ENCODE measurements at regions of chr7 and their contacts with region 1.

Region 1: GRCh38 chr7:97064967-97065587 is 40.4 kb upstream of the DLX5 start:
- DNase-seq: peak in 4 of 5 donors; percentile 20 to 38 (median 28)
- H3K4me3 ChIP-seq: no peak overlapping the region
- H3K4me3 Mint-ChIP-seq: no peak overlapping the region
- H3K27ac ChIP-seq: no peak overlapping the region
- H3K27ac Mint-ChIP-seq: no peak overlapping the region
- H3K4me1 ChIP-seq: no peaks in the 10 kb centered on the region
- H3K4me1 Mint-ChIP-seq: no peaks in the 10 kb centered on the region
- H3K27me3 ChIP-seq: no peaks in the 10 kb centered on the region
- H3K27me3 Mint-ChIP-seq: peaks cover 1 to 2% of the 10 kb centered on the region in 2 donors

Region 2: GRCh38 chr7:96075510-96076349 is 989.3 kb before region 1 on chr7:
- CTCF ChIA-PET with region 1: interaction called, 9 read pairs
- POLR2A ChIA-PET with region 1: no interaction called
- intact Hi-C with region 1: loop called (anchors 1 kb)
- DNase-seq: peak; percentile 36 to 49 (median 42)
- H3K4me3 ChIP-seq: peak overlapping the region in 1 of 2 donors; percentile 30
- H3K4me3 Mint-ChIP-seq: peak overlapping the region; percentile 86 to 95 (median 88)
- H3K27ac ChIP-seq: no peak overlapping the region
- H3K27ac Mint-ChIP-seq: no peak overlapping the region
- H3K4me1 ChIP-seq: peaks cover 10% of the 10 kb centered on the region
- H3K4me1 Mint-ChIP-seq: peaks cover 0 to 9% (median 6%) of the 10 kb centered on the region in 4 donors
- H3K27me3 ChIP-seq: peaks cover 15% of the 10 kb centered on the region
- H3K27me3 Mint-ChIP-seq: peaks cover 17 to 27% of the 10 kb centered on the region in 2 donors

Region 3: DNA sequence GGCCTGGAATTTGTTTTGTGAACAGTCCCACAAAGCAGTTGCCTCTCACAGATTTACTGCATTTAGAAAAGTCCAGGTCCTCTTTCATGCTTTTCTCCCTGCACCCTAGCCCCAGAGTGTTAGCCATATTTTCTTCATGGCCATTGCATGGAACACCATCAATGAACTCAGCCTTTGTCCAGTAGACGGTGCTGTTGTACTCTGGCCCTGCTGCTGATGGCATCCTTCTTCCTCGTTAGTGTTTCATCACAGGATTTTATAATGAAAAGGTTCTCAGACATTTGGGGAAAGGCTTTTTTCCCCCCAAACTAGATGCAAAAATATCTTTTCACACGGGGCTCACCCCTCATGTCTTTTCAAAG is 650.2 kb before region 1 on chr7:
- CTCF ChIA-PET with region 1: no interaction called
- POLR2A ChIA-PET with region 1: no interaction called
- intact Hi-C with region 1: loop called (anchors 2 kb)
- DNase-seq: peak; percentile 20 to 47 (median 43)
- H3K4me3 ChIP-seq: no peak overlapping the region
- H3K4me3 Mint-ChIP-seq: no peak overlapping the region
- H3K27ac ChIP-seq: no peak overlapping the region
- H3K27ac Mint-ChIP-seq: no peak overlapping the region
- H3K4me1 ChIP-seq: no peaks in the 10 kb centered on the region
- H3K4me1 Mint-ChIP-seq: no peaks in the 10 kb centered on the region
- H3K27me3 ChIP-seq: no peaks in the 10 kb centered on the region
- H3K27me3 Mint-ChIP-seq: peaks cover 0 to 8% of the 10 kb centered on the region in 2 donors

Region 4: GRCh38 chr7:97075928-97076327 is 10.9 kb after region 1 on chr7:
- CTCF ChIA-PET with region 1: interaction called, 20 read pairs
- POLR2A ChIA-PET with region 1: no interaction called
- intact Hi-C with region 1: no loop called
- DNase-seq: no peak
- H3K4me3 ChIP-seq: no peak overlapping the region
- H3K4me3 Mint-ChIP-seq: no peak overlapping the region
- H3K27ac ChIP-seq: no peak overlapping the region
- H3K27ac Mint-ChIP-seq: no peak overlapping the region
- H3K4me1 ChIP-seq: no peaks in the 10 kb centered on the region
- H3K4me1 Mint-ChIP-seq: no peaks in the 10 kb centered on the region
- H3K27me3 ChIP-seq: no peaks in the 10 kb centered on the region
- H3K27me3 Mint-ChIP-seq: peaks cover 16 to 29% of the 10 kb centered on the region in 2 donors

Measured in CD4-positive, alpha-beta memory T cell (primary cell).